ENCODE measurements at regions of chr1 and their contacts with region 1.

Region 1: DNA sequence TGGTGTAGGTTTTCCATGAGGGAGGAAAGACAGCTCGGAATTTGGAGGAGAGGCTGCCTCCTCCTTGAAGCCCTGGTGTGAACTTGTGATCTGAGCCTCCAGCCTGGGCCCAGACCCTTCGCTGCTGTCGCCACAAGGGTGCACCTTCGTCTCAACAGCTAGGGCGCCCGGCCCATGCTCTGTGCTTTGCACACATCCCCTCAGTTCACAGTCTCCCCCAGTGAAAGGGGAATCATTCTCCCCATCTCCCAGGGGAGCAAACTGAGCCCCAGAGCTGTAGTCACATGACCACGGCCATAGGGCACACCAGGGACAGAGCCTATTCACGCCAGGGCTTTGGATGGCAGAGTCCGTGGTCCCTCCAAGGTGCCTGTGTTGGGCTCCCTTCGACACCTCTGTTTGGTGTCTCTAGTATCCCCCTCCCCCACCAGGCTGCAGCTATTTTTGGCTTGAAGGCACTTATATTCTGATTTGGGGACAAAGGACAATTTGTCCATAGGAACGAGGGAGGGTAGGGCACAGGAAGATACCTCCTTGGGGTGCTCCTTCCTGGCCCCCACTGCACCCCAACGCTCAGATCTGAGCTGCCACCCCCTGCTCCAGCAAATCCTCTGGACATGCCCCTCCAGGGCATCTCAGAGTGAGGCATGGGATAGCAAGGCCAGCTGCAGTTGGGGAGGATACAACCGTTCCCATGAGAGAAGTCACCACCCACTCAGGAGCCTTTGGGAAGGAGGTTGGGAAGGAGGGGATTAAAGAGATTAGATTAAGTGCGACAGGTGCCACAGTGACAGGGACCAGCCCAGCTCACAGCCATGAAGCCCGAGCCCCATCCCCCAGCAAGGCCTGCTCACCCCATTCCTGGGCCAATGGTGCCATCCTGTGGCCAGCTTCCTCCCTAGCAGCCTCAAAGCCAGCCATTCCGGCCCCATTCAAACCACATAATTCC is 15.7 kb downstream of the MATN1 start:
- DNase-seq: peak; percentile 81
- CTCF ChIP-seq: peak; percentile 84

Region 2: GRCh38 chr1:29235955-29236684 is 1471.6 kb before region 1 on chr1 and contains the start of gene PTPRU:
- CTCF ChIA-PET with region 1: interaction called, 11 read pairs
- POLR2A ChIA-PET with region 1: no interaction called
- DNase-seq: peak; percentile 93
- CTCF ChIP-seq: peak; percentile 96

Measured in GM10248 (cell line).